ENCODE measurements at regions of chr13 and their contacts with region 1.

Region 1: GRCh38 chr13:59391696-59392095 is 772.0 kb downstream of the DIAPH3 start:
- DNase-seq: peak in 1 of 2 donors; percentile 85
- ATAC-seq: peak; percentile 26 to 89 (median 84)
- H3K4me3 ChIP-seq: no peak overlapping the region
- H3K27ac ChIP-seq: peak overlapping the region in 6 of 10 donors; percentile 2 to 61 (median 52)
- H3K4me1 ChIP-seq: peaks cover 0 to 14% (median 5%) of the 10 kb centered on the region in 9 donors
- H3K27me3 ChIP-seq: no peaks in the 10 kb centered on the region
- CTCF ChIP-seq: peak; percentile 78 to 93 (median 90)

Region 2: DNA sequence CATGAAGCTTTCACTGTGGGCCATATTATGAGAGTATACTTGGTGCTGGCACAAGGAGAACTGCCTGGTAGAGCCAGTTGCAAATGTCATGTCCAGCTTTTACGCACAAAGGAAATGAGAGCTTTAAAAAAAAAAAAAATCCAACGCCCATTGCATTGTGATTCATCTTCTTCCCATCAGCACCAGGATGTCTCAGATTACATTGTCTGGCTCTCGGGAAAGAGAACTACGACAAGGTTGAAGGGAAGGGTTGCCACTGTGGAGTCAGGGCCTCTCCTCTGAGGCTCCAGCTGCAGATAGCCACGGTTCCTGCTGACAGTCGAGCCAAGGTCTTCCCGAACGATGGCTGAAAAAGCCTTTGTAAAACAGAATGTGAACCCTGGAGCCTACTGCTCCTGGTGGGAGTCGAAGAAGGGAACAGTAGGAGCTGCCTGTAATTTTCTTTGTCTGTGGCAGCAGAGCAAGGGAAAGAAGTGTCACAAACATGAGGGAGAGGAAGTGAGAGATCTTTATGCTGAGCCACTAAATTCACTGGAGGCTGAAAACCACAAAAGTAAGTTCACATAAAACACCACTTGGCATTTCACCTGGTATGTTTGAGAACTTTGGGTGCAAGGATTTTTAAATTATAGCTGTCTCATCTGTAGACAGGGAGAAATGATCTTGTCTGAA is 67.3 kb after region 1 on chr13:
- intact Hi-C with region 1: no loop called
- DNase-seq: peak; percentile 19 to 29
- ATAC-seq: peak; percentile 68 to 94 (median 88)
- H3K4me3 ChIP-seq: no peak overlapping the region
- H3K27ac ChIP-seq: peak overlapping the region; percentile 44 to 84 (median 74)
- H3K4me1 ChIP-seq: peaks cover 0 to 20% (median 13%) of the 10 kb centered on the region in 9 donors
- H3K27me3 ChIP-seq: no peaks in the 10 kb centered on the region
- CTCF ChIP-seq: no peak

Region 3: DNA sequence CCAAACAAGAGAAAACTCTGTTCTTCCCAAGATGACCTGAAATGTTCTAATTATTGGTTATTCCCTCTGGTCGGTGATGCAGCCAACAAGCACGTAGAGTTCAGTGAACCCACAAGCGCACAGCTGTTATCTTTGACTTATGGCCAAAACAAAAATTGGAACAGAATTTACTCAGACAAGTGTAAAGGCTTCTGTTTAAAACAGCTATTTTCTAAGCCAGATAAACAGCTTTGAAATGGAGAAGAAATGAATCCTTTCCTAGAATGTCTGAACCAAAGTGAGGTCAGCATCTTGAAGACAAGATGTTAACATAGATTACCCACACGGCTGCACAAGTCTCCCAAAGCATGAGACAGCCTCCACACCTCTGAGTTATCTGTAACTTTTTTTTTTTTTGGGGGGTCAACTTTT is 102.9 kb after region 1 on chr13:
- intact Hi-C with region 1: loop called in 1 of 10 experiments (anchors 1 kb)
- DNase-seq: peak in 1 of 2 donors; percentile 69
- ATAC-seq: peak; percentile 26 to 91 (median 84)
- H3K4me3 ChIP-seq: no peak overlapping the region
- H3K27ac ChIP-seq: peak overlapping the region in 5 of 10 donors; percentile 24 to 67 (median 44)
- H3K4me1 ChIP-seq: peaks cover 0 to 49% (median 25%) of the 10 kb centered on the region in 9 donors
- H3K27me3 ChIP-seq: no peaks in the 10 kb centered on the region
- CTCF ChIP-seq: no peak

Region 4: DNA sequence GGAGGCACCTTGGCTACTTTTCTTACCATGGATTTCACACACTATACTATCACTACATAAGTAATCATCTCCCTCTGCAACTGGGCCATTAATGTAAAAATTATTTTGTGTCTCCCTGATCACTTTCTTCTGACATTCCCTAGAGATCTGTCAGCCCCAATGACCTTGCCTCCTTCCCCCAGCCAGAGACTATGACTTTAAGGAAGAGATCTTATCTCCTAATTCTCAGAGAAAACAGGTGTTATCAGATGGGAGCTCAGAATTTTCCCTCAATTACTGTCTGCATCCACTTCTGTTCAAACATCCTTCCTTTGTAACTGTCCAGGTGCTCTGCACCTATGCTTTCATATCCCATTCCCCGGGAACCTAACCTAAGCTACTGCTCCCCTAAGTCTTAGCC is 374.5 kb after region 1 on chr13:
- intact Hi-C with region 1: loop called in 7 of 10 experiments (anchors 5 to 10 kb)
- DNase-seq: no peak
- ATAC-seq: no peak
- H3K4me3 ChIP-seq: no peak overlapping the region
- H3K27ac ChIP-seq: no peak overlapping the region
- H3K4me1 ChIP-seq: peaks cover 0 to 7% (median 0%) of the 10 kb centered on the region in 9 donors
- H3K27me3 ChIP-seq: no peaks in the 10 kb centered on the region
- CTCF ChIP-seq: no peak

Region 5: GRCh38 chr13:59906413-59907049 is 514.8 kb after region 1 on chr13:
- intact Hi-C with region 1: loop called in 5 of 10 experiments (anchors 5 to 10 kb)
- DNase-seq: no peak
- ATAC-seq: no peak
- H3K4me3 ChIP-seq: no peak overlapping the region
- H3K27ac ChIP-seq: no peak overlapping the region
- H3K4me1 ChIP-seq: no peaks in the 10 kb centered on the region
- H3K27me3 ChIP-seq: no peaks in the 10 kb centered on the region
- CTCF ChIP-seq: peak in 7 of 9 donors; percentile 40 to 70 (median 60)